Ascending aorta (tissue), 2 donors: ENCODE measurements at regions of chr13 and their contacts with region 1.

Region 1: GRCh38 chr13:48400850-48401291 is 12.0 kb downstream of the LPAR6 start:
- DNase-seq: no peak
- H3K4me3 ChIP-seq: no peak overlapping the region
- H3K27ac ChIP-seq: peak overlapping the region; percentile 74
- H3K4me1 ChIP-seq: peaks cover 3 to 40% of the 10 kb centered on the region in 2 donors
- H3K27me3 ChIP-seq: no peaks in the 10 kb centered on the region
- CTCF ChIP-seq: no peak

Region 2: DNA sequence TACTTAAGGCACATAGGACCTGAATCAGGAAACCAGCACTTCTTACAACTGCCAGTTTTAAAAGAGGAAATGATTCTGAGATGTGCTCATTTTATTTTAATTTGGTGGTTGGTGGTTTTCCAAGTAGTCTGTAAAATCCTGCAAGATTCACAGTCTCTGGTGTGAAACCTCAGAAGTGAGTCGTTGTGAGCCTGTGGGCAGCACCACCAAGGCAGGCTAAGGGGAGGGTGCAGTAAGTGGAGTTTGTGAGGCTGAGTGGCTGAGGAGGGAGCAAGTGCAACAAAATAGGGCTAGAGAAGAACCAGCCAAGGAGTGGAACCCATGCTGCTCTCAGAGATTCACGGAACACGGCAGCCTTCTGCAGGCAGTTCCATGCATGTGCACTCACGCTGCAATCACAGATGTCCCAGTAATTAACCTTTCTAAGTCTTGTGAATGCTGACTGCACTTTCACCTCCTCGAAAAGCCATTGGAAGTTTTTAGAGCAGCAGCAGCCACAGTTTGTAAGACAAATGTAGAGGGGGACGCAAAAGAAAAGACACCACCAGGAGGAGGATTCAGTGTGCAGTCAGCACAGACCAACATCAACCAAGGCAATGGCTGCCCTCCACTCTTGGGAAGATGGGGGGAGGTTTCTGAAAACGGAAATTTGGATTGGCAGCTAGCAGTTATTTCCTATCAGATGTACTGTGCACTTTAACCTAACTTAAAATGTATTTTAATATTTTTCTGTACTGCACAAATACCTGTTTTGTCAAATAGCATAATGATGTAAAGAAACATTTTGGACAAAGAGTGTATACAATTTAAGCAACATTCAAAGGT is 1648.8 kb before region 1 on chr13:
- intact Hi-C with region 1: no loop called
- DNase-seq: no peak
- H3K4me3 ChIP-seq: no peak overlapping the region
- H3K27ac ChIP-seq: no peak overlapping the region
- H3K4me1 ChIP-seq: peaks cover 0 to 4% of the 10 kb centered on the region in 2 donors
- H3K27me3 ChIP-seq: no peaks in the 10 kb centered on the region
- CTCF ChIP-seq: no peak

Region 3: GRCh38 chr13:48448959-48449614 is 48.2 kb after region 1 on chr13:
- intact Hi-C with region 1: loop called (anchors 2 kb)
- DNase-seq: no peak
- H3K4me3 ChIP-seq: no peak overlapping the region
- H3K27ac ChIP-seq: peak overlapping the region; percentile 48 to 56
- H3K4me1 ChIP-seq: peaks cover 5 to 26% of the 10 kb centered on the region in 2 donors
- H3K27me3 ChIP-seq: no peaks in the 10 kb centered on the region
- CTCF ChIP-seq: no peak

Region 4: DNA sequence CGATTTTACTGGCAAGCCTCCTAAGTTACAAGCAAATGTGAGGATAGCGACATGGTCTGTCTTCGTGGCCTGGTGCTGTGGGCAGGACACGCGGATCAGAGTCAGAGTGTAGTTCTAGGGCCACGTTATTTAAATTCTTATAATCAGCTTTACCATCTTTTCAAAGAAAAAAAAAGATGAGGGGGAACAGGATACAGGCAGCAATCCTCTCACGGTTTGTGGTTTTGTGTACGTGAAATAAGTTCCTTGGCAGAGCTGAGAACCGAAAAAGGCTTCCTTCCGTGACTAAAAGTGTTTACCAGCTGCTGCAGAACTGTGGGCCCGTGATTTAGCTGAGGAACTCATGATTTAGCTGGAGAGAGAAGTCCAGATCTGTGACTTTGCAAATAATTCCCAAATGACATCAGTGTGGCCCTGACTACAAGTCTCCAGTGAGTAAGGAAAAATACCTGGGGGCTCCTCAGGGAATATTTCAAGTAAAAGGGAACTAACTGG is 104.8 kb after region 1 on chr13:
- intact Hi-C with region 1: loop called (anchors 2 kb)
- DNase-seq: peak; percentile 49 to 80
- H3K4me3 ChIP-seq: peak overlapping the region in 1 of 2 donors; percentile 51
- H3K27ac ChIP-seq: peak overlapping the region; percentile 86 to 91
- H3K4me1 ChIP-seq: peaks cover 0 to 15% of the 10 kb centered on the region in 2 donors
- H3K27me3 ChIP-seq: no peaks in the 10 kb centered on the region
- CTCF ChIP-seq: no peak